Activated CD8-positive, alpha-beta memory T cell treated with anti-CD3 and anti-CD28 coated beads, Interleukin-2, amount 10 ng/mL, durations not matched to agents 7 days and 5 days (primary cell): ENCODE measurements at regions of chr21 and their contacts with region 1.

Region 1: DNA sequence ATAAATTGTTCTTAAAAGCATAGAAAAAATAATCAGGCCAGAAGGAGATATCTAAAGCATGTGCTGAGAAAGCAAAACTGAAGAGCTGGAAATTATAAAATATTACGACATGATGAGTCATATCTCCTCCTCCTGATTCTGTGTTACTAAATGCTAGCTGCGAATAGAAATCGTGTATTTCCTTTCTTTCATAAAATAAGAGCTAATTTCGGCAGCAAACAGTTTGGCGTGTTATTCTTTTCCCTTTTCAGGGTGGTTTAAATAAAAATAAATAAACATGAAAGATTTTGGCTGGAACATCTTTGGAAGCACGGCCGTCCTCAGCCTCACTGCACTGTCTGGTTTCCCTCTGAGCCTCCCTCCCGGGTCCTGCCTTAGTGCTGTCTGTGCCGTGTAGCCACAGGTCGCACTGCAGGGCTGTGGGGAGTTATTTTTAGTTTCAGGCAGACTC is 56.0 kb downstream of the ADARB1 start:
- DNase-seq: no peak
- ATAC-seq: peak; percentile 57
- H3K4me3 Mint-ChIP-seq: no peak overlapping the region
- H3K27ac Mint-ChIP-seq: no peak overlapping the region
- H3K4me1 Mint-ChIP-seq: peaks cover 20% of the 10 kb centered on the region
- H3K27me3 Mint-ChIP-seq: no peaks in the 10 kb centered on the region

Region 2: DNA sequence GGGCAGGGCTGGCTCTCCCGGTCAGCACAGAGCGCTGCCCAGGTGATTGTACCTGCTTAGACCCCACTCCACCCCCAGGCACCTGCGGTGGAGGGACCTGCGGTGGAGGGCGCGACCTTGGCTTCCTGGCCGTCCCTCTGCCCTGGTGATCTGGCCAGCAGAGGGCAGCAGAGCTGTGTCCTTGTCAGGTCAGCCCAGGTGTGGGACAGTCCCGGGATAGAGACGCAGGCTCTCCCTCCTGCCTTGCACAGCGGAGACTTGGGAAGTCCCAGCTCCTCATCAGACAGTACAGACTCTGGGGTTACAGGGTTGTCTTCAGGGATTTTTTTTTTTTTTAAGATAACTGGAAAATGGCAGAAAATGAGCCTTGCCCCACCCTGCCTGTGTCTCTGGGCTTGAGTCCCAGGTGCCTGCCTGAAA is 180.6 kb before region 1 on chr21:
- CTCF ChIA-PET with region 1: interaction called, 275 read pairs
- DNase-seq: peak; percentile 88
- ATAC-seq: peak; percentile 89
- H3K4me3 Mint-ChIP-seq: no peak overlapping the region
- H3K27ac Mint-ChIP-seq: no peak overlapping the region
- H3K4me1 Mint-ChIP-seq: peaks cover 4% of the 10 kb centered on the region
- H3K27me3 Mint-ChIP-seq: no peaks in the 10 kb centered on the region

Region 3: GRCh38 chr21:44965251-44966022 is 164.9 kb before region 1 on chr21:
- CTCF ChIA-PET with region 1: interaction called, 30 read pairs
- DNase-seq: peak; percentile 47
- ATAC-seq: peak; percentile 62
- H3K4me3 Mint-ChIP-seq: no peak overlapping the region
- H3K27ac Mint-ChIP-seq: no peak overlapping the region
- H3K4me1 Mint-ChIP-seq: peaks cover 37% of the 10 kb centered on the region
- H3K27me3 Mint-ChIP-seq: no peaks in the 10 kb centered on the region

Region 4: DNA sequence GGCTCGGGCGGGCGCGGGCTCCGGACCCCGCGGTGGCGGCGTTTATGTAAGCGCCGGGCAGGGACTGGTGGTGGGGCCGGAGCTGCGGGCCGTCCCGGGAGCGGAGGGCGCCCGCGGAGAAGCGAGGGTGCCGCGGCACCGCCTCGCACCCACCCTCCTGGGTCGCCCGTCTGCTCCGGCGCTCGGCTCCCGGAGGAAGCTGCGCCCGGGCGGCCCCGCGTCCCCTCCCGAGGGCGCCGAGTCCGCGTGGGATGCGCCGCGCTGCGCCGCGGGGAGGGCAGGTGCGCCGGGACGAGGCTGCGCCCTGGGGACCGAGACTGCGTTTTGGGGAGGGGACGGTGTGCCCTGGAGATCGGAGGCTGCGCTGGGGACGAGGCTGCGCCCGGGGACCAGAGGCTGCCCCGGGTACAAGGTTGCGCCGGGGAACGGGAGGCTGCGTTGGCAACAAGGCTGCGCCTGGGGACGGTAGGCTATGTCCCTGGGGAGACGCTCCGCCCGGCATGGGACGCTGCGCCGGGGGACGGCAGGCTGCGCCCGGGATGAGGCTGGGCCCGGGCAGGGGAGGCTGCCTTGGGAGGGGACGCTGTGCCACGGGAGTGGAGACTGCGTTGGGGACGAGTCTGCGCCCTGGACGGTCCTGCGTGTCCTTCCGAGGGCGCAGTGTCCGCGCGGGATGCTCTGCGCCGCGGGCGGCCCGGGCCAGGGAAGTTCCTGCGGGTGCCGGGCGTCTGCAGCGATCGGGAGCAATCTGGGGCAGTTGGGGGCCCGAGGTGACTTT is 55.3 kb before region 1 on chr21:
- CTCF ChIA-PET with region 1: interaction called, 25 read pairs
- DNase-seq: no peak
- ATAC-seq: peak; percentile 7
- H3K4me3 Mint-ChIP-seq: peak overlapping the region; percentile 76
- H3K27ac Mint-ChIP-seq: no peak overlapping the region
- H3K4me1 Mint-ChIP-seq: peaks cover 48% of the 10 kb centered on the region
- H3K27me3 Mint-ChIP-seq: peaks cover 9% of the 10 kb centered on the region